Spleen (tissue), 13 donors: ENCODE measurements at regions of chr19 and their contacts with region 1.

Region 1: GRCh38 chr19:28633319-28634018 is 579.5 kb downstream of the UQCRFS1 start:
- DNase-seq: no peak
- H3K4me3 ChIP-seq: no peak overlapping the region
- H3K27ac ChIP-seq: peak overlapping the region in 1 of 8 donors; percentile 17
- H3K4me1 ChIP-seq: peaks cover 0 to 12% (median 0%) of the 10 kb centered on the region in 6 donors
- H3K27me3 ChIP-seq: no peaks in the 10 kb centered on the region
- CTCF ChIP-seq: peak; percentile 59 to 87 (median 81)
- POLR2A ChIP-seq: no peak

Region 2: GRCh38 chr19:28463493-28464053 is 169.9 kb before region 1 on chr19:
- intact Hi-C with region 1: loop called (anchors 5 kb)
- DNase-seq: peak; percentile 51
- H3K4me3 ChIP-seq: no peak overlapping the region
- H3K27ac ChIP-seq: no peak overlapping the region
- H3K4me1 ChIP-seq: peaks cover 0 to 27% (median 2%) of the 10 kb centered on the region in 6 donors
- H3K27me3 ChIP-seq: peaks cover 0 to 3% (median 0%) of the 10 kb centered on the region in 7 donors
- CTCF ChIP-seq: no peak
- POLR2A ChIP-seq: no peak

Region 3: DNA sequence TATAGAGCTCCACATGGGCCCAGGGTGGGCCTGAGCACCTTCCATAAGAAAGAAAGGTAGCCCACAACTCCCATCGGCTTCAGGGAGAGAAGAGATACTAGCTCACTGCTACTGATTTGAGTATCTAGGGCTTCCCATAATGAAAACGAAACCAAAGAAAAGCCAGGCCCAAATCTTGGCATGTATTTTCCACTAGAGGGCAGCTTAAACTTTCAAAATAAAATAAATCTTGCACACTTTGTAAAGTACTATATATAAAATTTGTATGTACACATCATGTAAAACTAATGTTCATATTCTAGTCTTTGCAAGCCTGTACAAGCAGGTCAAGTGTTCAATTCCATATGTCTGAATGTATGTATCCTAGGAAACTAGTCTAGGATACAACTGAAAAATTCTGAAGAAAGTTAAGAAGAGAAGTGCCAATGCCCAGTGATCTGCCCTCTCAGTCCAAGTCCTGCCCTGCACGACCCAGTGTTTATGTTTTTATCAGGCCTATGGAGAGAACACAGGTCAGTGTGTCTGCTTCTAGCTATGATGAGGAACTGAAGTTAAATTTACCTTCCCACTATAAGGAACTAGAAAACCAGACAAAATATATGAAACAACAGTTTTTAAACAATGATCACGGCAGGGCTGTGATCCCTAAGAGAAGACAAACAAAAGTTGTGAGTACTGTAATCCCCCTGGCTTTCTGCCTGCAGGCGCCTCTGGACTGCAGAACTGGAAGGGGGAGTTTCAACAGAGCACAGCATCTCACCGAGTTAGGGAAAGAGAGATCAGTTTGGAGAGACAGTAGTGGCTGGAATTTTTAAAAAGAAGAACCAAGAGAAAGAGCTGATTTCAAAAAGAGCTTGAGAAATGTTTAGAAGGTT is 103.8 kb after region 1 on chr19:
- intact Hi-C with region 1: no loop called
- DNase-seq: no peak
- H3K4me3 ChIP-seq: peak overlapping the region in 1 of 8 donors; percentile 19
- H3K27ac ChIP-seq: peak overlapping the region in 4 of 8 donors; percentile 51 to 73 (median 66)
- H3K4me1 ChIP-seq: peaks cover 0 to 9% (median 3%) of the 10 kb centered on the region in 6 donors
- H3K27me3 ChIP-seq: no peaks in the 10 kb centered on the region
- CTCF ChIP-seq: peak in 9 of 11 experiments; percentile 30 to 77 (median 52)
- POLR2A ChIP-seq: no peak